ENCODE measurements at regions of chr12 and their contacts with region 1.

Region 1: GRCh38 chr12:14803011-14803829 is at the starts of genes C12orf60 and WBP11:
- DNase-seq: peak; percentile 94 to 99
- H3K4me3 ChIP-seq: peak within 1 kb of the TSS; percentile 96
- H3K27ac ChIP-seq: peak within 1 kb of the TSS; percentile 58
- H3K4me1 ChIP-seq: peaks cover 23% of the 10 kb centered on the region
- H3K27me3 ChIP-seq: no peaks in the 10 kb centered on the region
- CTCF ChIP-seq: no peak
- total RNA-seq, gene C12orf60: 3.3 and 4.0 TPM in 2 replicates
- total RNA-seq, gene WBP11: 65.8 and 124 TPM in 2 replicates

Region 2: GRCh38 chr12:14403711-14404196 is 399.5 kb before region 1 on chr12:
- CTCF ChIA-PET with region 1: no interaction called
- POLR2A ChIA-PET with region 1: interaction called, 12 read pairs
- intact Hi-C with region 1: no loop called
- DNase-seq: no peak
- H3K4me3 ChIP-seq: no peak overlapping the region
- H3K27ac ChIP-seq: peak overlapping the region; percentile 1; the same call in 1 of the 2 replicates
- H3K4me1 ChIP-seq: peaks cover 9% of the 10 kb centered on the region; the same call in 1 of the 2 replicates
- H3K27me3 ChIP-seq: no peaks in the 10 kb centered on the region
- CTCF ChIP-seq: no peak

Region 3: DNA sequence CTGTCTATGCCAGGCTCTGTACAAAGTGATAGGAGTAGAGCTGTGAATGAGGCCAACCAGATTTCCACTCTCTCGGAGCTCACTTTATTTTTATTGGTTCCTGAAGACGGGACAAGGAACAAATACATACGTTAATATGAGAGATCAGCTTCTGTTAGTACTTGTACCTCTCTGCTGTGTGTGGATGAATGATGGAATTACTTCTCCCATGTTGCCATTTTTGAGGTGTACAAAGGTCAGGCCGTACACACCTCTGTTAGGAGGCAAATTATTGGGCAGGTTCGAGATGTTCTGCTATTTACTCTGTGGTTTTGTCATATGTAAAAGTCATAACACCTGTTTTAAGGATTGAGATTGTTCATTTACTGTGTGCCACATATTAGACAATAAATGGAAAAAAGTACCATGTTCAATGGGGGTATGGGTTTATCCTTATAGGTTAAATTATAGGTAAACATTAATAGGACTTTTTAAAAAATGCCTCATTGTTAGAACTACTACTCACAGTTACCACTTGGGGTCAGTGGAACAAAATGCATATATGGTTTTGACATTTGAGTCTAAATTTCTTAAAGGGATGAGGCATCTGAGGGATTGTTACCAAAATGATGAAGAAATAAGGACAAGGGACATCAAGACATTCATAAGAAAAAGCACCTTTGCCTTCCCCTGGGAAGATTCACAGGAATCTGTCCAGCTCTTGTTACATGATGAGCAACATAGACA is 26.8 kb before region 1 on chr12:
- CTCF ChIA-PET with region 1: interaction called, 5 read pairs
- POLR2A ChIA-PET with region 1: interaction called, 21 read pairs
- intact Hi-C with region 1: loop called (anchors 1 kb)
- DNase-seq: peak in 1 of 2 experiments; percentile 49
- H3K4me3 ChIP-seq: peak overlapping the region; percentile 91
- H3K27ac ChIP-seq: peak overlapping the region; percentile 89
- H3K4me1 ChIP-seq: peaks cover 41% of the 10 kb centered on the region
- H3K27me3 ChIP-seq: no peaks in the 10 kb centered on the region
- CTCF ChIP-seq: peak; percentile 46; the same call in 1 of the 2 replicates

Region 4: GRCh38 chr12:14836302-14837210 is 33.3 kb after region 1 on chr12:
- CTCF ChIA-PET with region 1: no interaction called
- POLR2A ChIA-PET with region 1: interaction called, 12 read pairs
- intact Hi-C with region 1: loop called (anchors 1 kb)
- DNase-seq: peak; percentile 57 to 93
- H3K4me3 ChIP-seq: peak overlapping the region; percentile 31
- H3K27ac ChIP-seq: peak overlapping the region; percentile 90
- H3K4me1 ChIP-seq: peaks cover 45% of the 10 kb centered on the region
- H3K27me3 ChIP-seq: no peaks in the 10 kb centered on the region
- CTCF ChIP-seq: no peak

Measured in PC-9 (cell line).